HEK293 (cell line): ENCODE measurements at regions of chr17 and their contacts with region 1.

Region 1: GRCh38 chr17:40219073-40219860 is at the start of gene WIPF2:
- H3K4me3 ChIP-seq: peak within 1 kb of the TSS; percentile 80
- H3K27ac ChIP-seq: peak within 1 kb of the TSS; percentile 92
- H3K4me1 ChIP-seq: peaks cover 3% of the 10 kb centered on the region
- CTCF ChIP-seq: peak; percentile 96

Region 2: DNA sequence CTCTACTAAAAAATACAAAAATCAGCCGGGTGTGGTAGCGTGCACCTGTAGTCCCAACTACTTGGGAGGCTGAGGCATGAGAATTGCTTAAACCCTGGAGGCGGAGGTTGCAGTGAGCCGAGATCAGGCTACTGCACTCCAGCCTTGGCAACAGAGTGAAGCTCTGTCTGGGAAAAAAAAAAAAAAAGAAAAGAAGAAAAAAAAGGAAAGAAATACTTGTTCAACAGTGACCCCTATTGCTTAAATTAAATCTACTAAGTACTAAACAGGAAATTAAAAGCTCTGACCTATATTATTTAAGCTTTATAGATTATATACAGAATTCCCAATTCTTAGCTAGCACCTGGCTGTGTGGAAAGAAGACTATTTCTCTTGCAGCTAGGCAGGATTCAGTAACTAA is 866.8 kb before region 1 on chr17:
- CTCF ChIA-PET with region 1: no interaction called
- POLR2A ChIA-PET with region 1: no interaction called
- H3K4me3 ChIP-seq: no peak overlapping the region
- H3K27ac ChIP-seq: no peak overlapping the region
- H3K4me1 ChIP-seq: 0 out of 2 replicates have a peak, but pooled peaks cover 2% of the 10 kb centered on the region
- CTCF ChIP-seq: no peak

Region 3: GRCh38 chr17:40203131-40203530 is 16.1 kb before region 1 on chr17:
- CTCF ChIA-PET with region 1: interaction called, 40 read pairs
- POLR2A ChIA-PET with region 1: interaction called, 8 read pairs
- H3K4me3 ChIP-seq: no peak overlapping the region
- H3K27ac ChIP-seq: no peak overlapping the region
- H3K4me1 ChIP-seq: no peaks in the 10 kb centered on the region
- CTCF ChIP-seq: no peak